Adrenal gland (tissue), 19 donors: ENCODE measurements at regions of chr19 and their contacts with region 1.

Region 1: GRCh38 chr19:10502524-10503001 is 593 bp downstream of the KEAP1 start:
- DNase-seq: peak; percentile 94 to 96 (median 94)
- H3K4me3 ChIP-seq: peak overlapping the region; percentile 46 to 95 (median 81)
- H3K27ac ChIP-seq: peak overlapping the region; percentile 65 to 98 (median 95)
- H3K4me1 ChIP-seq: peaks cover 10 to 41% of the 10 kb centered on the region in 2 donors
- H3K27me3 ChIP-seq: no peaks in the 10 kb centered on the region
- CTCF ChIP-seq: no peak
- POLR2A ChIP-seq: peak; percentile 70 to 90

Region 2: GRCh38 chr19:10461047-10461790 is 41.3 kb before region 1 on chr19:
- intact Hi-C with region 1: no loop called
- DNase-seq: peak; percentile 97 to 99 (median 97)
- H3K4me3 ChIP-seq: peak overlapping the region in 1 of 4 donors; percentile 7
- H3K27ac ChIP-seq: peak overlapping the region in 2 of 5 donors; percentile 6 to 41
- H3K4me1 ChIP-seq: peaks cover 5 to 6% of the 10 kb centered on the region in 2 donors
- H3K27me3 ChIP-seq: no peaks in the 10 kb centered on the region
- CTCF ChIP-seq: no peak
- POLR2A ChIP-seq: peak in 1 of 2 donors; percentile 24

Region 3: DNA sequence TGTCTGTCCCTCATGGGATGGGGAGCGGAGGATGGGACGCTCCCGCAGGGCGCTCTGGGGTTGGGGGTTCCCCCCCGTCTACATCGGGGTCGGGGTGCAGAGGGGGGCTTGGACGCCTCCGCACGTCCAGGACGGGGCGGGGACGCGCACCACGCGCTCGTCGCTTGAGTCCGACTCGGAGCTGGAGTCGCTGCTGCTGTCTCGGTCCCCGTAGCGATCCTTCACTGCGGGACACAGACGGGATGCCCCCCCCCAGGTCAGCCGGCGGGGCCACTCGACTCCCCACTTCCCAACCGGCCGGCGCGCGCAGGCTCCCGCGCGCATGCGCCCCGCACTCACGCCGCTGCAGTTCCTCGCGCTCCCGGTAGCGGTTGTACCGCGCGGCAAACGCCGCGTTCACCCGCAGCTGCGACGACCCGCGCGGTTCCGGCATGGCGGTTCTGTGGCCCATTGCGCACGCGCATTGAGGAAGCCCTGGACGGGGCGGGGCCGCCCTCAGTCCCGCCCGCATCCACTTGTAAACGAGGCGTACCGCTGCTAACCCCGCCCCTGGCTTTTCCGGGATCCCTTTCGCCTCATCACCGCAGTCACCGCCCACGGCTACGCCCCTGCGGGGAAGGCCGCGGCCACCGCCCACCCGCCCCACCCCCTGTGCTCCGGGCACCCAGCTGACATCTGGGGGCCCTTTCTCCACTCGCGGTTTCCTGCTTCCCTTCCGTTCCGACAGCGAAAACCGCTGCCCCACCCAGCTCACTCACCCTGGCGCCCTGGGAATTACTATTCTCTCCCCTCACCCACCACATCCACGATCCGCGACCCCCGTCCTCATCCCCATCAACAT is 63.2 kb after region 1 on chr19 and contains the start of gene KRI1:
- intact Hi-C with region 1: loop called (anchors 5 to 10 kb)
- DNase-seq: peak; percentile 98 to 99 (median 99)
- H3K4me3 ChIP-seq: peak within 1 kb of the TSS; percentile 16 to 90 (median 60)
- H3K27ac ChIP-seq: peak within 1 kb of the TSS; percentile 52 to 99 (median 82)
- H3K4me1 ChIP-seq: peaks cover 10 to 37% of the 10 kb centered on the region in 2 donors
- H3K27me3 ChIP-seq: no peaks in the 10 kb centered on the region
- CTCF ChIP-seq: peak in 5 of 6 experiments; percentile 31 to 74 (median 51)
- POLR2A ChIP-seq: peak; percentile 46 to 68
- total RNA-seq, gene KRI1: 7.1 to 32.4 (median 18.7) TPM

Region 4: GRCh38 chr19:10574462-10574861 is 71.9 kb after region 1 on chr19:
- intact Hi-C with region 1: loop called (anchors 5 to 10 kb)
- DNase-seq: no peak
- H3K4me3 ChIP-seq: no peak overlapping the region
- H3K27ac ChIP-seq: no peak overlapping the region
- H3K4me1 ChIP-seq: peaks cover 4 to 8% of the 10 kb centered on the region in 2 donors
- H3K27me3 ChIP-seq: no peaks in the 10 kb centered on the region
- CTCF ChIP-seq: no peak
- POLR2A ChIP-seq: no peak